WTC11 (cell line): ENCODE measurements at regions of chr12 and their contacts with region 1.

Region 1: GRCh38 chr12:42482445-42483237 is 106.9 kb downstream of the PRICKLE1 start:
- DNase-seq: peak; percentile 84
- ATAC-seq: peak; percentile 66
- H3K4me3 Mint-ChIP-seq: peak overlapping the region; percentile 80
- H3K27ac Mint-ChIP-seq: no peak overlapping the region
- H3K4me1 Mint-ChIP-seq: peaks cover 76% of the 10 kb centered on the region
- H3K27me3 Mint-ChIP-seq: peaks cover 50% of the 10 kb centered on the region
- CTCF ChIP-seq: peak; percentile 84

Region 2: GRCh38 chr12:42284157-42284556 is 198.5 kb before region 1 on chr12:
- CTCF ChIA-PET with region 1: no interaction called
- POLR2A ChIA-PET with region 1: no interaction called
- DNase-seq: no peak
- ATAC-seq: no peak
- H3K4me3 Mint-ChIP-seq: no peak overlapping the region
- H3K27ac Mint-ChIP-seq: no peak overlapping the region
- H3K4me1 Mint-ChIP-seq: no peaks in the 10 kb centered on the region
- H3K27me3 Mint-ChIP-seq: no peaks in the 10 kb centered on the region; the same call in none of the 2 replicates
- CTCF ChIP-seq: no peak

Region 3: DNA sequence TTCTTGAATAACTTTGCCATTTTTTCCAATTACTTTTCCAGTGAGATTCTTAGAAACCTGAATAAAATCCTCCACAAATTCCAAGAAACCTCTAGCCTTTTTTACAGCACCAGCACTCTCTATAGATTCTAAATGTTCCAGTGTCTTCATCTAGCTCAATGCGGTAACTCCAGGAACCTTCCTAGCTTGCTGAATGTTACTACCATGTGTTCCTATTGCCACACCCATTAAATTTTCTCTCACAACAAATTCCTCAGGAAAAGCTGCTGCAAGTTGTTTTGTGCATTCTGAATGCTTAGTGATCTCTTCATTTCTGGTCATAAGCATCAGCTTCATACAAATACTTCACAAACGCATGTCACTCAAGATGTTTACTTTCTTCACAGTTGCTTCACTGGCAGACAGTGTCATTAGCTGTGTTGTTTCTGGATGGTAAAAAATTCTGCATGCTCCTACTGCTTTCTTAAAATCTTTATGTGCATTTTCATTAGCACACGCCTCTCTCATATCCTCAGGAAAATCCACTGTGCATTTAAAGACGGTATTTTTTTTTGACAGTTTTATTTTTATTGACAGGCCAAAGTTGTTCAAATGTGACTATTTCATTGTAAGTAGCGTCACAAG is 50.0 kb before region 1 on chr12:
- CTCF ChIA-PET with region 1: no interaction called
- POLR2A ChIA-PET with region 1: no interaction called
- DNase-seq: no peak
- ATAC-seq: no peak
- H3K4me3 Mint-ChIP-seq: no peak overlapping the region
- H3K27ac Mint-ChIP-seq: no peak overlapping the region
- H3K4me1 Mint-ChIP-seq: peaks cover 3% of the 10 kb centered on the region
- H3K27me3 Mint-ChIP-seq: no peaks in the 10 kb centered on the region
- CTCF ChIP-seq: no peak

Region 4: DNA sequence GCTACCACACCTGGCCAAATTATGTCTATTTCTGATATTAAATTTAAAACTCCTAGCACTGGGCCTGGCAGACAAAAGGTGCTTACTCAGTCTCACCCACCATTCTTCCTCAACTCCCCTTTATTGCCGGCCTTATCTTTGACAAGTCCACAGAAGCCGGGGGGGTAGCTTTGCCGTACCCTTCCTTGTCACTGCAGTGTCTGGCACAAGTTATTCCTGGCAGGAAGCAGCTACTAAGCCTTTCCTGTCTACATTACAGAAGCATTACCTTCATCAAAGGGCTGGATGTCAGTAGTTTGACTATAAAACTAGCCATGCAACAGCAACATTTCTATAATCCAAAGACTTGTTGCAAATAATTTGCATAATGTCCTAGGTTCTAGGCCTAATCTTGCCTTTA is 20.2 kb before region 1 on chr12:
- CTCF ChIA-PET with region 1: interaction called, 10 read pairs
- POLR2A ChIA-PET with region 1: no interaction called
- DNase-seq: no peak
- ATAC-seq: no peak
- H3K4me3 Mint-ChIP-seq: no peak overlapping the region
- H3K27ac Mint-ChIP-seq: no peak overlapping the region
- H3K4me1 Mint-ChIP-seq: peaks cover 41% of the 10 kb centered on the region
- H3K27me3 Mint-ChIP-seq: peaks cover 8% of the 10 kb centered on the region
- CTCF ChIP-seq: no peak

Region 5: GRCh38 chr12:42504049-42504448 is 21.4 kb after region 1 on chr12:
- CTCF ChIA-PET with region 1: interaction called, 10 read pairs
- POLR2A ChIA-PET with region 1: no interaction called
- DNase-seq: no peak
- ATAC-seq: no peak
- H3K4me3 Mint-ChIP-seq: no peak overlapping the region
- H3K27ac Mint-ChIP-seq: no peak overlapping the region
- H3K4me1 Mint-ChIP-seq: peaks cover 18% of the 10 kb centered on the region
- H3K27me3 Mint-ChIP-seq: peaks cover 8% of the 10 kb centered on the region; the same call in 1 of the 2 replicates
- CTCF ChIP-seq: no peak

Region 6: GRCh38 chr12:42568952-42569915 is 86.6 kb after region 1 on chr12:
- CTCF ChIA-PET with region 1: interaction called, 75 read pairs
- POLR2A ChIA-PET with region 1: interaction called, 4 read pairs
- DNase-seq: no peak
- ATAC-seq: no peak; the same call in 1 of the 2 replicates
- H3K4me3 Mint-ChIP-seq: no peak overlapping the region
- H3K27ac Mint-ChIP-seq: no peak overlapping the region
- H3K4me1 Mint-ChIP-seq: peaks cover 32% of the 10 kb centered on the region
- H3K27me3 Mint-ChIP-seq: peaks cover 22% of the 10 kb centered on the region
- CTCF ChIP-seq: peak; percentile 27

Region 7: GRCh38 chr12:42588524-42589464 is 106.2 kb after region 1 on chr12:
- CTCF ChIA-PET with region 1: interaction called, 19 read pairs
- POLR2A ChIA-PET with region 1: no interaction called
- DNase-seq: peak; percentile 73
- ATAC-seq: peak; percentile 73
- H3K4me3 Mint-ChIP-seq: peak overlapping the region; percentile 77
- H3K27ac Mint-ChIP-seq: no peak overlapping the region
- H3K4me1 Mint-ChIP-seq: peaks cover 16% of the 10 kb centered on the region
- H3K27me3 Mint-ChIP-seq: peaks cover 51% of the 10 kb centered on the region
- CTCF ChIP-seq: no peak

Region 8: DNA sequence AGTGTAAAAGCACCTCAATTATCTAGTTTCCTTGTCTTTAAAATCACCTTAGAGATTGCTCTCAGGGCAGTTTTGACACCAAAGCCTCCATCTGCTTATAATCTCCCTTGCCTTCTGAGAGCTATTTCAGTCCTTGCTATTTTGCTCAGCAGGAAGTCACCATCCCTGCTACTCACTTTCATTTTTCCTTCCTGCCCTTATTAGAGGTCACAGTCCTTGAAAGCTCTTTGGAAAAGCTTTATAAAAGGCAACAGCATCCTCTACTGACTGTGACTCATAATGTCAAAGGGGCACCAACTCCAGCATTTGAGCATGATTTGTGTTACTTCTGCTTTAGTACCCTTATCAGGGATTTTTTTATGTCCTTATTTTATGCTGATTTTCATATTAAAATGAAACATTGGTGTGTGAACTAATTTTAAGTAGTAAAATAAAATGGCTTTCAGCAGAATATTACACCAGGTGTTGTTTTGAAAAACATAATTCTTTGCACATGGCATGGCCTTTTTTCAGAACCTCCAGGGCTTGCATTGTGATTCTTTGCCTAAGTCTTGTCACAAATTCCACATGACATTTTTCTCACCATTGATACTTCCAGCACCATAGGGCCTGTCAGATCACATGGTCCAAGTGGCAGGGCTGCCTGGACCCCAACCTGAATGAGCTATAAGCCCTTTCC is 856.3 kb after region 1 on chr12:
- CTCF ChIA-PET with region 1: interaction called, 10 read pairs
- POLR2A ChIA-PET with region 1: no interaction called
- DNase-seq: no peak
- ATAC-seq: peak; percentile 93
- H3K4me3 Mint-ChIP-seq: no peak overlapping the region
- H3K27ac Mint-ChIP-seq: no peak overlapping the region
- H3K4me1 Mint-ChIP-seq: peaks cover 19% of the 10 kb centered on the region
- H3K27me3 Mint-ChIP-seq: no peaks in the 10 kb centered on the region; the same call in 1 of the 2 replicates
- CTCF ChIP-seq: 0 out of 2 replicates have a peak, but pooled peaks have one; percentile 19